ENCODE measurements at regions of chr17 and their contacts with region 1.

Region 1: GRCh38 chr17:50200457-50201275 is 765 bp downstream of the COL1A1 start:
- DNase-seq: peak; percentile 76 to 92 (median 89)
- H3K4me3 ChIP-seq: peak overlapping the region; percentile 6 to 74 (median 56)
- H3K27ac ChIP-seq: no peak overlapping the region
- H3K4me1 ChIP-seq: peaks cover 0 to 19% (median 18%) of the 10 kb centered on the region in 4 experiments
- H3K27me3 ChIP-seq: peaks cover 0 to 33% (median 21%) of the 10 kb centered on the region in 5 experiments

Region 2: GRCh38 chr17:50177983-50178834 is 22.5 kb before region 1 on chr17:
- CTCF ChIA-PET with region 1: interaction called, 87 read pairs
- POLR2A ChIA-PET with region 1: no interaction called
- DNase-seq: peak; percentile 74 to 86 (median 81)
- H3K4me3 ChIP-seq: peak overlapping the region in 4 of 7 experiments; percentile 23 to 66 (median 50)
- H3K27ac ChIP-seq: no peak overlapping the region
- H3K4me1 ChIP-seq: peaks cover 0 to 13% (median 10%) of the 10 kb centered on the region in 4 experiments
- H3K27me3 ChIP-seq: no peaks in the 10 kb centered on the region

Region 3: GRCh38 chr17:50213026-50214022 is 12.7 kb after region 1 on chr17:
- CTCF ChIA-PET with region 1: interaction called, 83 read pairs
- POLR2A ChIA-PET with region 1: interaction called, 3 read pairs
- DNase-seq: peak; percentile 46 to 87 (median 87)
- H3K4me3 ChIP-seq: no peak overlapping the region
- H3K27ac ChIP-seq: no peak overlapping the region
- H3K4me1 ChIP-seq: peaks cover 0 to 12% (median 5%) of the 10 kb centered on the region in 4 experiments
- H3K27me3 ChIP-seq: peaks cover 0 to 11% (median 0%) of the 10 kb centered on the region in 5 experiments

Region 4: DNA sequence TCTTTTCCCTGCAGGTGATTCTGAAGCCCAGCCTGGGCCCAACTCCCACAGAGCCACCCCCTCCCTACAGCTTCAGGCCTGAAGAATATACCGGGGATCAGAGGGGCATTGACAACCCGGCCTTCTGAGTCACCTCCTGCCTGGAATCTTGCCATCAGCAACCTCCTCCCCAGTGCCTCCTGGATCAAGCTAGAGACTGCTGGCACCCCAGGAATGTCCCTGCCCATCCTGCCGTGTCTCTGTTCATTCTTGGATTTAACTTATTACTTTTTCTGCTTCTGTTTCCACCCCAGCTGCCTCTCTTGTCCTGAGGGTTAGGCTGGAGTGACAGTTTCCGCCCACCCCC is 78.5 kb after region 1 on chr17:
- CTCF ChIA-PET with region 1: interaction called, 184 read pairs
- POLR2A ChIA-PET with region 1: no interaction called
- DNase-seq: no peak
- H3K4me3 ChIP-seq: no peak overlapping the region
- H3K27ac ChIP-seq: no peak overlapping the region
- H3K4me1 ChIP-seq: peaks cover 0 to 30% (median 20%) of the 10 kb centered on the region in 4 experiments
- H3K27me3 ChIP-seq: no peaks in the 10 kb centered on the region